ENCODE measurements at regions of chr19 and their contacts with region 1.

Region 1: DNA sequence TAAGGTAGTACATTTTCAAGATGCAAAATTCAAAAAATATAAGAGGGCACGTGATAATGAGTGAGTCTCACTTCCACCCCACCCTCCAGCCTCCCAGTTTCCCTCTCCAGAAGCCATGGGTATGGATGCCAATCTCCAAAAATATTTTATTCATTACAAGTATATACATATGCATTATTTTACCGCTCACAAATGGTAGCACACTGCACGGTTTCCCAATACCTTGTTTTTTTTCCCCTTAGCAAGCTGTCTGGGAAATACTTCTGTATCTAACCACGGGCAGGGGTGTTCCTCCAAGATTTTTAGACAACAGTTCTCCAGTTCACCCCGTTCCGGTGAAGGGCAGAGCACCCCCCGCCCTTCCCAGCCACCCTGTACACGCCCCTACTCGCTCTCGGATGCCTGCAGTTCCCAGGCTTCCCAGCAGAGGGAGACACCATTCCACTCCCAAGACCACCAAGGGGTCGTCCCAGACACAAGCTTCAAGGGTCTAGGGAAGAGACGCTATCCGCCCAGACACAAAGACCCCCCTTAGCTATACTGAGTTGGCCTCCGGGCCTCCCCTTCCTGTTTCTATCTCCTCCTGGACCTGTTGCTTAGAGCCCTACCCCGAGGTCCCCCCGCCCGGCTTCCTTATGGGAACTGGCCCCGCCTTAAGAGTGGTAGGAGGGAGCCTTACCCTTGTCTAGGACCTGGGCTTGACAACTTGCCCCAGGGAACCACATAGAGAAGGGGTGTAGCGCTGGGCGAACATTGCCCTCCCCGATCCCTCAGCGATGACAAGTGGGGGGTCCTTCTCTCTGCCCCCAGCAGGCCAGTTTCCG is 1.1 kb upstream of the FXYD3 start:
- DNase-seq: peak; percentile 40
- H3K4me3 Mint-ChIP-seq: no peak overlapping the region
- H3K27ac Mint-ChIP-seq: no peak overlapping the region
- H3K4me1 Mint-ChIP-seq: peaks cover 4% of the 10 kb centered on the region
- H3K27me3 Mint-ChIP-seq: no peaks in the 10 kb centered on the region

Region 2: DNA sequence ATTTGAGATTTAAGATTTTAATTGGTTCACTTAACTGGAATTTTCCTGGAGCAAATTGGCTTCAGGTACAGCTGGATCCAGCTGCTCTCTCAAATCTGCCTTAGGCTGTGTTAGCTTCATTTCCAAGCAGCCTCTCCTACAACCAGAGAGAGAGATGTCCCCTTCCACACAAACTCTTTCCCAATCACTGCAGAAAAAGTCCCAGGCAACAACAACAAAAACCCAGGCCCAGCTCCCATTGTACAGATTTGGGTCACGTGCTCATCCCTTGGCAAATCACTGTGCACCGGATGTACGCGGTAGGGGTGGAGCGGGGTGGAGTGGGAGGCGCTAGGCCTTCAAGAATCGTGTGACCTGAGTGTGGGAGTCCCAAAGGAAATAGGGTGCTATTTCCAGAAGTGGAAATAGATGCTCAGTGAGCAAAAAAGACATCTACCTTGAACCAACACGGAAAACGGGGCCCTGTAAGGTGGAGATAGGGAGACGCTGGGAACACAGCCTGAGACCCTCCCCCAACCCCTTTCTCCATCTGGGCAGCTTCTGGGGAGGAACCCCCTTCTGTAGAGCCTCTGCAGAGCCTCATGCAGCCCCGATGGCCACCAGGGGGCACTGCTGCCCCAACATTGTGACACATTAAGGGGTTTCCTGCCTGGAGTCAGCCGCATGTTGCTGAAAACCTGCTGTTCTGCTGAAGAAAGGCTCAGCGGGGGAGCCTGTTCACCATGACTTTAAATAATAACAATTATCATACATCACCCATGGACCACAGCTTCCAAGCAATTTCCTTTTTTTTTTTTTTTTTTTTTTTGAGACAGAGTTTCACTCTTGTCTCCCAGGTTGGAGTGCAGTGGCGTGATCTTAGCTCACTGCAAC is 47.6 kb before region 1 on chr19:
- intact Hi-C with region 1: loop called (anchors 2 kb)
- DNase-seq: peak; percentile 75
- H3K4me3 Mint-ChIP-seq: no peak overlapping the region
- H3K27ac Mint-ChIP-seq: peak overlapping the region; percentile 27
- H3K4me1 Mint-ChIP-seq: peaks cover 10% of the 10 kb centered on the region
- H3K27me3 Mint-ChIP-seq: no peaks in the 10 kb centered on the region